CD14-positive monocyte (primary cell): ENCODE measurements at regions of chr11 and their contacts with region 1.

Region 1: DNA sequence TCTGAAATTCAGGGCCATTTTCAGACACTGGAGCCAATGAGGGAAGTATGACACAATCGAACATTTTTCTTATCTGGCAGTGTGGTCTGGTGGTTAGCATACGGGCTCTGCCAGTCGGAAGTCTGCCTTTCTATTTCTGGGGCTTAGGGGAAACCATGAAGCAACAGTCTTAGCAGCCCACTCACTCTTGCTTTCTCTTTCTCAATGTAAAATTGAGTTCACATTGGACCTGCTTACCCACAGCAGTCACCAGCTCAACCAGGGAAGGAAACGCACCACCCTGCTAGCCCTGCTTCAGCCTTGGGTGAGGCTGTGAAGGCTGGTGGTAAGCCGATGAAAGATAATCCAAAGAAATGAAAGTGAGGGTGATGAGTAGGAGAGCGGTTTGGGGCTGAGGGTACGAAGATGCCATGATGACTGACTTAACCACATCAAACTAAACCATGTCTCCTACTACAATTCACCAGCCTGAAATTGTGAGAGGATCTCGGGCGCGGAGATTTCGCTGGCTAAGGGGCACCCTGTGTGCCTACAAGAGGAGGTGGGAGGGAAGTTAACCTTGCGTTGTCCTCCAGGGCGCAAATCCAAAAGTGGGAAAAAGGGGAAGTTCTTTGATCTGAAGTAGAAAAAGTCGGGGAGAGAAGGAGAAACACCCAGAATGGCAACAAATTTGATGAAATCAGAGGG is 2.0 kb upstream of the LMO2 start:
- DNase-seq: peak; percentile 75 to 91 (median 82)
- H3K4me3 ChIP-seq: peak overlapping the region; percentile 48 to 82 (median 62)
- H3K4me3 Mint-ChIP-seq: peak overlapping the region; percentile 82 to 93
- H3K27ac ChIP-seq: peak overlapping the region; percentile 92 to 98
- H3K27ac Mint-ChIP-seq: peak overlapping the region; percentile 94 to 100 (median 98)
- H3K4me1 ChIP-seq: peaks cover 99% of the 10 kb centered on the region in 2 donors
- H3K4me1 Mint-ChIP-seq: peaks cover 90% of the 10 kb centered on the region
- H3K27me3 ChIP-seq: no peaks in the 10 kb centered on the region
- H3K27me3 Mint-ChIP-seq: no peaks in the 10 kb centered on the region
- CTCF ChIP-seq: no peak

Region 2: DNA sequence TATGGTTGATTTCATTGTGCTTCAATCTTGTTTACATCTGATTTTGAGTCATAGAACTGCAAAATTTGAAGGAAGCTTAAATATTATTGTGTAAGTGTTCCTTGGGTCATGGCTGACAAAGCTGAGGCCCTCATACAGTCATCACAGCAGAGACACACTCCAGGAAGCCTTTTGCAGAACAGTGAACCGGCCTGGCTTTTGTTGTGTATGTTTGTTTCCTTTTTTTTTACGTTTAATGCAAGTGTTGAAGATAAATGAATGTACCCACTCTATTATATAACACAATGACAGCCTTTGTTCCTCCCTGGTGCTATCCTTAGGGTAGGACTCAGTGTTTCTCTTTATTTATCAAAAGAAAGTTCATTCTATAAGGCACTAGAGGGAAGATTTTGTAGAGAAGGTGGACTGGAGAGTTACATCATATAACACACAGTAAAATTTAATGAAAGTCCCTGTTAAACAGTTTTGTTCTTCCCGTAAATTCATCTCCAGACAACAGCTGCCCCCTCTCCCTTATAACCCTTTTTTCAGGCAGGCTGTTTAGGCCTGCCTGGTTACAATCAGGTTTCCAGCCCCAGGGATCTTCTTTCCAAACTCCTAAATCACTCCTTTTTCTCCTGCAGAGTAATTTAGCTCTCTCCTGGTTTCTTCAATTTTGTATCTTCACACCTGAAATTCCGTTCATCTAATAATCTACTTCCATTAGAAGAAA is 698.2 kb before region 1 on chr11:
- intact Hi-C with region 1: no loop called
- DNase-seq: peak; percentile 86 to 93 (median 92)
- H3K4me3 ChIP-seq: peak overlapping the region in 1 of 3 experiments; percentile 32
- H3K4me3 Mint-ChIP-seq: no peak overlapping the region
- H3K27ac ChIP-seq: peak overlapping the region; percentile 83 to 93
- H3K27ac Mint-ChIP-seq: peak overlapping the region; percentile 94 to 98 (median 96)
- H3K4me1 ChIP-seq: peaks cover 74 to 79% of the 10 kb centered on the region in 2 donors
- H3K4me1 Mint-ChIP-seq: peaks cover 62% of the 10 kb centered on the region
- H3K27me3 ChIP-seq: no peaks in the 10 kb centered on the region
- H3K27me3 Mint-ChIP-seq: peaks cover 0 to 1% (median 0%) of the 10 kb centered on the region in 3 donors
- CTCF ChIP-seq: no peak

Region 3: GRCh38 chr11:33912405-33913361 is 18.8 kb after region 1 on chr11:
- intact Hi-C with region 1: loop called in 1 of 2 experiments (anchors 2 kb)
- DNase-seq: peak; percentile 89 to 98 (median 96)
- H3K4me3 ChIP-seq: peak overlapping the region in 1 of 3 experiments; percentile 26
- H3K4me3 Mint-ChIP-seq: peak overlapping the region; percentile 37 to 70
- H3K27ac ChIP-seq: peak overlapping the region; percentile 88 to 89
- H3K27ac Mint-ChIP-seq: peak overlapping the region; percentile 96 to 99 (median 98)
- H3K4me1 ChIP-seq: peaks cover 60 to 69% of the 10 kb centered on the region in 2 donors
- H3K4me1 Mint-ChIP-seq: peaks cover 59% of the 10 kb centered on the region
- H3K27me3 ChIP-seq: no peaks in the 10 kb centered on the region
- H3K27me3 Mint-ChIP-seq: peaks cover 0 to 2% (median 1%) of the 10 kb centered on the region in 3 donors
- CTCF ChIP-seq: no peak

Region 4: DNA sequence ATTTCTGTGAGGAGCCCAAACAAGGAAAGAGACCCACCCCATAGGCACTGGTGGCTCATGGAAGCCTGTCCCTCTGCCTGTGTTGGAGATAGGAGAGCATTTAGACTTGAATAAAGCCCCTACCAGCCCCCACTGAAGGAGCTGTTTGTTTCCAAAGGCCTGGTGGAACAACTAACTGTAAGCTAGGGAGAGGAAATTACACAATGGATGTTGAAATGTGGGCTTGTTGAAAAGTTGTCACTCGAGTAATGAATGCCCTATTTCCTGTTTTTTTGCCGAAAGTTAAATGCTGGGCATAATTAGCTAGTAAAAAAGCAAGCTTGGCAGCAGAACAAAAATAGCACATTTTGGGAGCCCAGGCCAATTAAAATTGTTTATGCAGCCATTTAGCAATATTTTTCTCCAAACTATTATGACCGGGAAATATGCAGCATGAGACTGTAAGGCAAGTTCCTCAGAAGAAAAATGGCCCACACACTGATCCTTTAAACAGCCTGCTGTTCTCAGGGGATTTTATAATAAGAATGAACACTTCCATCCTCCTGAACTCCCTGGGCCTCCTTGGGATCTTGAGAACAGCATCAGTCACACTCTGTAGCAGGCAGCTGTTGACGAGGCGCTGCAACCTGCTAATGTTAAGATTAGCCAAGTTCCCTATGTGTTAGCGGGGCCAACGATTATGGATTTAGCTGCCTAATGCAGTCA is 36.6 kb after region 1 on chr11:
- intact Hi-C with region 1: loop called in 1 of 2 experiments (anchors 5 kb)
- DNase-seq: peak; percentile 83 to 99 (median 93)
- H3K4me3 ChIP-seq: peak overlapping the region in 2 of 3 experiments; percentile 23 to 68
- H3K4me3 Mint-ChIP-seq: peak overlapping the region; percentile 56 to 85
- H3K27ac ChIP-seq: peak overlapping the region; percentile 85 to 99
- H3K27ac Mint-ChIP-seq: peak overlapping the region; percentile 94 to 99 (median 98)
- H3K4me1 ChIP-seq: peaks cover 79 to 82% of the 10 kb centered on the region in 2 donors
- H3K4me1 Mint-ChIP-seq: peaks cover 82% of the 10 kb centered on the region
- H3K27me3 ChIP-seq: no peaks in the 10 kb centered on the region
- H3K27me3 Mint-ChIP-seq: no peaks in the 10 kb centered on the region
- CTCF ChIP-seq: no peak

Region 5: GRCh38 chr11:33942954-33943353 is 49.1 kb after region 1 on chr11:
- intact Hi-C with region 1: loop called in 1 of 2 experiments (anchors 5 kb)
- DNase-seq: peak; percentile 50 to 74 (median 54)
- H3K4me3 ChIP-seq: no peak overlapping the region
- H3K4me3 Mint-ChIP-seq: no peak overlapping the region
- H3K27ac ChIP-seq: peak overlapping the region in 1 of 2 donors; percentile 26
- H3K27ac Mint-ChIP-seq: peak overlapping the region; percentile 19 to 86 (median 65)
- H3K4me1 ChIP-seq: peaks cover 23 to 28% of the 10 kb centered on the region in 2 donors
- H3K4me1 Mint-ChIP-seq: peaks cover 28% of the 10 kb centered on the region
- H3K27me3 ChIP-seq: no peaks in the 10 kb centered on the region
- H3K27me3 Mint-ChIP-seq: peaks cover 0 to 3% (median 0%) of the 10 kb centered on the region in 3 donors
- CTCF ChIP-seq: no peak